PC-9 (cell line): ENCODE measurements at regions of chr9 and their contacts with region 1.

Region 1: GRCh38 chr9:96854073-96854876 is at the start of gene ZNF782:
- DNase-seq: peak; percentile 85 to 92
- H3K4me3 ChIP-seq: peak within 1 kb of the TSS; percentile 94
- H3K27ac ChIP-seq: no peak within 1 kb of the TSS
- H3K4me1 ChIP-seq: peaks cover 37% of the 10 kb centered on the region
- H3K27me3 ChIP-seq: no peaks in the 10 kb centered on the region
- CTCF ChIP-seq: no peak
- total RNA-seq, gene ZNF782: 7.2 and 11.5 TPM in 2 replicates

Region 2: GRCh38 chr9:96449845-96450612 is 404.2 kb before region 1 on chr9 and contains the start of gene HABP4:
- CTCF ChIA-PET with region 1: no interaction called
- POLR2A ChIA-PET with region 1: interaction called, 6 read pairs
- intact Hi-C with region 1: loop called (anchors 10 kb)
- DNase-seq: peak; percentile 74 to 97
- H3K4me3 ChIP-seq: peak within 1 kb of the TSS; percentile 65
- H3K27ac ChIP-seq: no peak within 1 kb of the TSS
- H3K4me1 ChIP-seq: peaks cover 9% of the 10 kb centered on the region
- H3K27me3 ChIP-seq: no peaks in the 10 kb centered on the region
- CTCF ChIP-seq: no peak
- total RNA-seq, gene HABP4: 8.1 and 11.0 TPM in 2 replicates

Region 3: GRCh38 chr9:96638606-96639364 is 215.5 kb before region 1 on chr9:
- CTCF ChIA-PET with region 1: no interaction called
- POLR2A ChIA-PET with region 1: no interaction called
- intact Hi-C with region 1: no loop called
- DNase-seq: no peak
- H3K4me3 ChIP-seq: no peak overlapping the region
- H3K27ac ChIP-seq: no peak overlapping the region
- H3K4me1 ChIP-seq: no peaks in the 10 kb centered on the region
- H3K27me3 ChIP-seq: no peaks in the 10 kb centered on the region
- CTCF ChIP-seq: no peak

Region 4: GRCh38 chr9:96777426-96777864 is 76.8 kb before region 1 on chr9:
- CTCF ChIA-PET with region 1: no interaction called
- POLR2A ChIA-PET with region 1: no interaction called
- intact Hi-C with region 1: loop called (anchors 1 kb)
- DNase-seq: no peak
- H3K4me3 ChIP-seq: peak overlapping the region; percentile 85
- H3K27ac ChIP-seq: no peak overlapping the region
- H3K4me1 ChIP-seq: no peaks in the 10 kb centered on the region; the same call in 1 of the 2 replicates
- H3K27me3 ChIP-seq: no peaks in the 10 kb centered on the region
- CTCF ChIP-seq: no peak

Region 5: GRCh38 chr9:96884438-96884837 is 30.2 kb after region 1 on chr9:
- CTCF ChIA-PET with region 1: interaction called, 25 read pairs
- POLR2A ChIA-PET with region 1: interaction called, 4 read pairs
- intact Hi-C with region 1: loop called (anchors 1 kb)
- DNase-seq: peak; percentile 93 to 98
- H3K4me3 ChIP-seq: no peak overlapping the region
- H3K27ac ChIP-seq: peak overlapping the region; percentile 74
- H3K4me1 ChIP-seq: peaks cover 30% of the 10 kb centered on the region
- H3K27me3 ChIP-seq: no peaks in the 10 kb centered on the region
- CTCF ChIP-seq: no peak

Region 6: DNA sequence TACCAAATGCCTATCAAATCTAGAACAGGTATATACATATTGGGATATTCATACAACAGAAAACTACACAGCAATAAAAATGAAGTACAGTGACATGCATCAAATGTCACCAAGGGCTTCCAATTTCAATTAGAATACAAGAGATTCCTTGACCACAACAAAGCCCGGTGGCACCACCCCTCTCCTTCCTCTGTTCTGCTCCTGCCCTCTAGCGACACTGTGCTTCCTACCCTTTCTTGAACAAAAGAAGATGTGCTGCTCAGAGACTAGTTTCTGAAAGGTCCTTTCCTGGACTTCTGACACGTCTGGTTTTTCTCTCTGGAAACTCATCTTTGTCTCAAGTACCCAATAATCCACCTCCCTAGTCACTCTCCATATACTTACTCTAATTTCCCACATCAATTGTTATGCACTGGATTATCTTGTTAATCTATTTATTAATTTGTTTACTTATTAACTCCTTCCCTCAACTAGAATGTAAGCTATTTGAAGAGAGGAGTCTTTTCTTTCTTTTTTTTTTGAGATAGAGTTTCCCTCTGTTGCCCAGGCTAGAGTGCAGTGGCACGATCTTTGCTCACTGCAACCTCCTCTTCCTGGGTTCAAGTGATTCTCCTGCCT is 255.0 kb after region 1 on chr9:
- CTCF ChIA-PET with region 1: no interaction called
- POLR2A ChIA-PET with region 1: no interaction called
- intact Hi-C with region 1: loop called (anchors 1 kb)
- DNase-seq: peak; percentile 62 to 68
- H3K4me3 ChIP-seq: no peak overlapping the region
- H3K27ac ChIP-seq: no peak overlapping the region
- H3K4me1 ChIP-seq: peaks cover 9% of the 10 kb centered on the region
- H3K27me3 ChIP-seq: no peaks in the 10 kb centered on the region
- CTCF ChIP-seq: peak; percentile 78

Region 7: GRCh38 chr9:97348866-97349265 is 494.6 kb after region 1 on chr9:
- CTCF ChIA-PET with region 1: no interaction called
- POLR2A ChIA-PET with region 1: no interaction called
- intact Hi-C with region 1: no loop called
- DNase-seq: no peak
- H3K4me3 ChIP-seq: no peak overlapping the region
- H3K27ac ChIP-seq: no peak overlapping the region
- H3K4me1 ChIP-seq: no peaks in the 10 kb centered on the region
- H3K27me3 ChIP-seq: 0 out of 2 replicates have a peak, but pooled peaks cover 4% of the 10 kb centered on the region
- CTCF ChIP-seq: no peak

Region 8: DNA sequence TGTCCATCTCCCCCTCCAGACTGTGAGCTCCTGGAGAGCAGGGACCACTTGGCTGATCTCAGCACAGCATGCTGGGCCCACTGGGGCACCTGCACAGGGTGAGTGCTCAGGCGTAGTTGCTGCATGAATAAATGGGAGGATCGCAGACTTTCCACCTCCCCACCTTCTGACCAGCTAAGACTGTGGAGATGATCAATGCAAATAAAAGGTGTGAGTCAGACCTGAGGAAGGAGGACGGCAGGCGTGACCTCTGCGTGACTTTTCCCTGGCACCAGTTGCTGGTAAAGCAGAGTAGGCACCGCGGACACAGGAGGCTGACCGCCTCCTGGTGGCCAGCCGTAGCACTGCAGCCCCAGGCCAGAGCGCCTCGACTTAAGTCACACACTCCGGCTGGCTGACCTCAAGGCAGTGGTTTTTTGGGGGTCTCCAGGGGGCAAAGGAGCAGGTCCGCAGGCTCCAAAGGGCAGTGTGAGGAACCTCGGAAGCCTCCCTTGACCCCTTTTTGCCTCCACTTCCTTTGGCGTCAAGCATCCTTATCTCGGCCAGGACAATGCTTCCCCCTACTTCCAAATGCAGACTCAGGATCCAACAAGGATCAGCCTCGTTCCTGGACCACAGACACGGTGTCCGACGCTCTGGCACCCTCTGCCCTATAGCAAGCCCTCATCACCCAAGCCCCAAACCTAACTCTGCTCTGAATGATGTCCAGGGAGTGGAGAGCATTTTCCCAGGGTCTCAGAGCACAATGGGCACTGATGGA is 544.9 kb after region 1 on chr9:
- CTCF ChIA-PET with region 1: interaction called, 13 read pairs
- POLR2A ChIA-PET with region 1: no interaction called
- intact Hi-C with region 1: loop called (anchors 1 kb)
- DNase-seq: peak; percentile 91 to 92
- H3K4me3 ChIP-seq: no peak overlapping the region
- H3K27ac ChIP-seq: 0 out of 2 replicates have a peak overlapping the region, but pooled peaks have one; percentile 8
- H3K4me1 ChIP-seq: peaks cover 6% of the 10 kb centered on the region
- H3K27me3 ChIP-seq: no peaks in the 10 kb centered on the region
- CTCF ChIP-seq: peak; percentile 97

Region 9: GRCh38 chr9:97598461-97599288 is 744.4 kb after region 1 on chr9:
- CTCF ChIA-PET with region 1: interaction called, 4 read pairs
- POLR2A ChIA-PET with region 1: no interaction called
- intact Hi-C with region 1: loop called (anchors 2 kb)
- DNase-seq: peak; percentile 69 to 74
- H3K4me3 ChIP-seq: no peak overlapping the region
- H3K27ac ChIP-seq: no peak overlapping the region
- H3K4me1 ChIP-seq: no peaks in the 10 kb centered on the region
- H3K27me3 ChIP-seq: no peaks in the 10 kb centered on the region
- CTCF ChIP-seq: peak; percentile 88